ENCODE measurements at regions of chr5 and their contacts with region 1.

Region 1: GRCh38 chr5:14108170-14108996 is 34.8 kb upstream of the TRIO start:
- DNase-seq: peak; percentile 30
- H3K4me3 ChIP-seq: no peak overlapping the region
- H3K27ac ChIP-seq: no peak overlapping the region
- H3K4me1 ChIP-seq: no peaks in the 10 kb centered on the region
- H3K27me3 ChIP-seq: no peaks in the 10 kb centered on the region
- CTCF ChIP-seq: peak in 3 of 4 experiments; percentile 29 to 52 (median 44)
- POLR2A ChIP-seq: no peak

Region 2: DNA sequence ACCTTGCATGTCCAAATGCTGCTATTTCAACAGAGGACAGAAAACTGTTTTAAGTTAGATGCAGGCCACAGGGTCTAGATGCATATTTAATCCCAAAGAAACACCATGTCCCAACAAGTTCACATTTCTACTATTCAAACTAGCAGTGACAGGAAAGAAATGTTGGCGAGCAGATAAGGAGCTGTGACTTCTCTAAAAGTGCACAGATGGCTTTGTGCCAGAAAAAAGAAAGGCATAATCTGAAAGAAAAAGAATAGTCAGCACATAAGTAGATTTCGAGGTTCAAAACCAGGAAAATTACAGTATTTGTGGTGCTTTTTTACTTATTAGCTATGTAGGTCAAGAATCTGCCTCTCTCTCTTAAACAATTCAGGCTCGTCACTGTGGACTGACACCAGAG is 342.1 kb before region 1 on chr5:
- intact Hi-C with region 1: no loop called
- DNase-seq: no peak
- H3K4me3 ChIP-seq: no peak overlapping the region
- H3K27ac ChIP-seq: no peak overlapping the region
- H3K4me1 ChIP-seq: no peaks in the 10 kb centered on the region
- H3K27me3 ChIP-seq: no peaks in the 10 kb centered on the region
- CTCF ChIP-seq: no peak
- POLR2A ChIP-seq: no peak

Region 3: DNA sequence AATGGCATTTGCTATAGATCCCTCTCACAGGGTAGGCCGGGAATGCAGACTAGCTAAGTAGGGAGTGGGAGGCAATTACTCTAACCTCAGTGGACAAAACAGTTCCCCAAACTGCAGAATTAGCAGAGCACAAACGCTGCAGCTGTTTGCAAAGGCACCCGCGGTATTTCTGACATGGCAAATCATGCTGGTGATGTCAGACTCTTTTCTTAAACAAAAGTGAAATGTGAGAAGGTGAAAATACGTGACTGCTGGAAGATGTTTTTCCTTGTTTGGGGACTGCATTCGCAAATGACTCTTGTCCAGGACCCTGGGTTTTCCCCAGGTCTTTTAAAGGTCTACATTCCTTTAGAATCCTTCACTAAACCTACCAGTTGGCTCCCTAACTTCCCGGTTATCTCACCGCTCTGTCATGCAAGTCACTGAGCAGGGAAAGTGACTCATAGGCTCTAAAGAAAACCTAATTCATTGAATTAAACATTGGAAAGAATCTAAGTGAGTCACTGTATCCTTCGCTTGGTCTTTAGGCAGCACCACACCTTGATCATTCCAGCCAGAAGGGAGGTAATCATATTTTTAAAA is 72.4 kb before region 1 on chr5:
- intact Hi-C with region 1: loop called (anchors 10 kb)
- DNase-seq: peak; percentile 59
- H3K4me3 ChIP-seq: no peak overlapping the region
- H3K27ac ChIP-seq: peak overlapping the region; percentile 54 to 55
- H3K4me1 ChIP-seq: no peaks in the 10 kb centered on the region
- H3K27me3 ChIP-seq: no peaks in the 10 kb centered on the region
- CTCF ChIP-seq: no peak
- POLR2A ChIP-seq: no peak

Region 4: DNA sequence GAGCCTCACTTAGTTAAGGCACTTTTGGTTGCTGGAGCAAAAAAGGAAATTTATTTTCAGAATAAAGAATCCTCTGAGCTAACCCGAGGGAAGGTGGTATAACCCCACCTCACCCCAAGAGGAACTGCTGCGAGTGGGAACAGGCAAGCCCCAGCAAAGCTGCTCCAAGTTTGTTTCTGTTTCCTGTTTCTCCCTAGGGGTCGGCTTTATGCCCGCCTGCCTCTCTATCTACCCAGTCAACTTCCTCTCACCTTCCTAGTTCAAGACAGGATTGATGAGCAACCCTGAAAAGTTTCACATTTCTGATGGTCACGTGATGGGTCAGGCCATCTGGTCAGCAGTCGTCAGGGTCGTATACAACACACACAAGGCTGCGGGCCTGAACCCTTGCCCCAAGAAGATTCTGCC is 65.9 kb after region 1 on chr5:
- intact Hi-C with region 1: no loop called
- DNase-seq: no peak
- H3K4me3 ChIP-seq: no peak overlapping the region
- H3K27ac ChIP-seq: no peak overlapping the region
- H3K4me1 ChIP-seq: no peaks in the 10 kb centered on the region
- H3K27me3 ChIP-seq: no peaks in the 10 kb centered on the region
- CTCF ChIP-seq: no peak
- POLR2A ChIP-seq: no peak

Region 5: GRCh38 chr5:14270209-14270702 is 161.9 kb after region 1 on chr5:
- intact Hi-C with region 1: loop called (anchors 2 kb)
- DNase-seq: no peak
- H3K4me3 ChIP-seq: no peak overlapping the region
- H3K27ac ChIP-seq: peak overlapping the region; percentile 42 to 43
- H3K4me1 ChIP-seq: peaks cover 19% of the 10 kb centered on the region
- H3K27me3 ChIP-seq: no peaks in the 10 kb centered on the region
- CTCF ChIP-seq: peak; percentile 52 to 76 (median 72)
- POLR2A ChIP-seq: no peak